GM12878 (cell line): ENCODE measurements at regions of chr10 and their contacts with region 1.

Region 1: GRCh38 chr10:50508315-50509051 is 115.3 kb downstream of the SGMS1 start:
- DNase-seq: peak; percentile 99
- ATAC-seq: peak; percentile 75
- H3K4me3 ChIP-seq: peak overlapping the region; percentile 4; the same call in 1 of the 2 replicates
- H3K27ac ChIP-seq: peak overlapping the region; percentile 80
- H3K4me1 ChIP-seq: peaks cover 68% of the 10 kb centered on the region
- H3K27me3 ChIP-seq: no peaks in the 10 kb centered on the region
- CTCF ChIP-seq: no peak
- EP300 ChIP-seq: peak; percentile 99 to 100
- POLR2A ChIP-seq: no peak
- RAD21 ChIP-seq: peak; percentile 27; the same call in 1 of the 2 replicates

Region 2: DNA sequence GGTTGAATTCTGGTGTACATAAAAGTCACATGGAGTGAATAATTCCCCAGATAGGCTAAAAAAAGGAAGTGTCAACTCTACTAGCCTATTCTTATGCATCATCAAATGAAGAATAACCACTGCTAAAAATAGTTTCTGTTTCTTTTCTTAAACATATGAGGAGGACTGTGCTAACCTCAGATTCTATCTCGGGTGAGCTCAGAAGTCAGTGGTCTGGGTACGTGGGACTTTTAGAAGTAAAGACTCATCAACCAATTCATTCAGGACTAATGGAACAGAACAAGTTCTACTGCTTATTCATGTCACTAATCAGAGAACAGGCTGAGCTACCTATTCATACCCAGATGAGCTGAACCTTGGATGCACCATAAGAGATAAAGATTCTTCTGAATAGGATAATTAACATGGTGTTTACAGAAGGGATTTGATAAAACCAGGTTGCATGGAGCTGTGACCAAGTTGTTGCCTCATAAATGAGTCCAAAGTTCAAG is 247.6 kb before region 1 on chr10:
- CTCF ChIA-PET with region 1: no interaction called
- POLR2A ChIA-PET with region 1: no interaction called
- RAD21 ChIA-PET with region 1: interaction called, 9 read pairs
- SMC1A ChIA-PET with region 1: interaction called, 10 read pairs
- in situ Hi-C with region 1: no loop called
- intact Hi-C with region 1: loop called (anchors 1 kb)
- DNase-seq: peak; percentile 71
- ATAC-seq: peak; percentile 99
- H3K4me3 ChIP-seq: no peak overlapping the region
- H3K27ac ChIP-seq: no peak overlapping the region
- H3K4me1 ChIP-seq: peaks cover 13% of the 10 kb centered on the region
- H3K27me3 ChIP-seq: no peaks in the 10 kb centered on the region; a peak in 2 of 4 replicates
- CTCF ChIP-seq: no peak
- EP300 ChIP-seq: peak; percentile 31 to 59; a peak in 2 of 4 replicates
- POLR2A ChIP-seq: no peak
- RAD21 ChIP-seq: no peak

Region 3: DNA sequence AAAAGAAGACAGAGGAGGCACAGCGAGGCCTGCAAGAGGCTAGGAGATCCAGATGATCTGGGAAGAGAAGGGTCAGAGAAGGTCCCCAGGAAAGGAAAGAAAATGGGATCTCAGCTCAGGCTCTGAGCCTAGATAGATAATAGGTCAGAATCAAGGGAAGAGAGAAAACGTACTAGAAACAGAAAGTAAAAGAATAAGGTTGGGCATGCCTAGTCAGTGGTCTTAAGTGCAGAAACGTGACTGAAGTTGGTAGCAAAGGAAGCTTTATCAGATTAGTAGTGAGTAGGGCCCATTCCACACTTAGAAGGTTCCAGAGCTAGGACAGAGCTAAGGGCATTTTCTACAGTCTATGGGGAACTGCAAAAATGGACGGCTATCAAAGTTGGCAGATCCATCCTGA is 172.3 kb before region 1 on chr10:
- CTCF ChIA-PET with region 1: no interaction called
- POLR2A ChIA-PET with region 1: no interaction called
- RAD21 ChIA-PET with region 1: no interaction called
- SMC1A ChIA-PET with region 1: no interaction called
- in situ Hi-C with region 1: no loop called
- intact Hi-C with region 1: no loop called
- DNase-seq: no peak
- ATAC-seq: peak; percentile 67
- H3K4me3 ChIP-seq: no peak overlapping the region
- H3K27ac ChIP-seq: peak overlapping the region; percentile 4; the same call in 1 of the 2 replicates
- H3K4me1 ChIP-seq: no peaks in the 10 kb centered on the region
- H3K27me3 ChIP-seq: no peaks in the 10 kb centered on the region
- CTCF ChIP-seq: no peak
- EP300 ChIP-seq: no peak
- POLR2A ChIP-seq: no peak
- RAD21 ChIP-seq: no peak

Region 4: DNA sequence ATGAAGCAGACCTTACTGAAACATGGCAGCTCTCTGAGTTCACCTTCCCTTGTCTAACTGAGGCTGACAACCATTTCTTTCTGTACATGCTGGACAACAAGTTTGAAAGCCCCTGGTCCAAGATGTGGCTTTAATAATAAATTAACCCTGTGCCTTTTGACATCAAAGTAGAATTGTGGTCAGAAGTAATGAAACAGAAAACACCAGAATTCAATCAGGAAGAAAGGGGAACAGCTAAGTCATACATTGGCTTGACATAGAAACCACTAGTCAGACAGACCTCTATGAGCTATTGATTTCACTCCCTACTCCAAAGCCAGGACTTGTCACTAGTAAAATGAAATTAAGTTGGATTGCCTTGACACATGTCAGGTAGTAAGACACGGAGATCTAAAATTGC is 82.0 kb before region 1 on chr10:
- CTCF ChIA-PET with region 1: interaction called, 8 read pairs
- POLR2A ChIA-PET with region 1: interaction called, 8 read pairs
- RAD21 ChIA-PET with region 1: interaction called, 18 read pairs
- SMC1A ChIA-PET with region 1: interaction called, 78 read pairs
- in situ Hi-C with region 1: loop called (anchors 5 kb)
- intact Hi-C with region 1: no loop called
- DNase-seq: peak; percentile 56
- ATAC-seq: peak; percentile 81
- H3K4me3 ChIP-seq: no peak overlapping the region
- H3K27ac ChIP-seq: no peak overlapping the region
- H3K4me1 ChIP-seq: peaks cover 23% of the 10 kb centered on the region
- H3K27me3 ChIP-seq: no peaks in the 10 kb centered on the region
- CTCF ChIP-seq: no peak
- EP300 ChIP-seq: no peak
- POLR2A ChIP-seq: no peak
- RAD21 ChIP-seq: no peak

Region 5: DNA sequence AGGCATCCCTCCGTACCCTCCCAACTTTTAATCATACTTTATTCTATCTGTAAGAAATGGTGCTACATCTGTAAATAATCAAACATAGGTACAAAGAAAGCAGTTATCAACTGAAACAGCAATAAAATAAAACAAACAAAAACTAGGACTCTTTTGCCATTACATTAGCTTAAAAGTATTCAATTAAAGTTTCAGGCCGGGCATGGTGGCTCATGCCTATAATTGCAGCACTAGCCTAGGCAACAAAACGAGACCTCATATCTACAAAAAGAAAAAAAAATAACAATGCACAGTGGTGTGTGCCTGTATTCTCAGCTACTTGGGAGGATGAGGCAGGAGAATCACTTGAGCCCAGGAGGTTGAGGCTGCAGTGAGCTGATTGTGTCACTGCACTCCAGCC is 46.6 kb before region 1 on chr10:
- CTCF ChIA-PET with region 1: interaction called, 8 read pairs
- POLR2A ChIA-PET with region 1: interaction called, 4 read pairs
- RAD21 ChIA-PET with region 1: interaction called, 28 read pairs
- SMC1A ChIA-PET with region 1: interaction called, 38 read pairs
- in situ Hi-C with region 1: no loop called
- intact Hi-C with region 1: no loop called
- DNase-seq: no peak
- ATAC-seq: no peak
- H3K4me3 ChIP-seq: no peak overlapping the region
- H3K27ac ChIP-seq: no peak overlapping the region
- H3K4me1 ChIP-seq: peaks cover 3% of the 10 kb centered on the region; the same call in 1 of the 2 replicates
- H3K27me3 ChIP-seq: no peaks in the 10 kb centered on the region; a peak in 1 of 4 replicates
- CTCF ChIP-seq: no peak
- EP300 ChIP-seq: no peak
- POLR2A ChIP-seq: no peak
- RAD21 ChIP-seq: no peak

Region 6: DNA sequence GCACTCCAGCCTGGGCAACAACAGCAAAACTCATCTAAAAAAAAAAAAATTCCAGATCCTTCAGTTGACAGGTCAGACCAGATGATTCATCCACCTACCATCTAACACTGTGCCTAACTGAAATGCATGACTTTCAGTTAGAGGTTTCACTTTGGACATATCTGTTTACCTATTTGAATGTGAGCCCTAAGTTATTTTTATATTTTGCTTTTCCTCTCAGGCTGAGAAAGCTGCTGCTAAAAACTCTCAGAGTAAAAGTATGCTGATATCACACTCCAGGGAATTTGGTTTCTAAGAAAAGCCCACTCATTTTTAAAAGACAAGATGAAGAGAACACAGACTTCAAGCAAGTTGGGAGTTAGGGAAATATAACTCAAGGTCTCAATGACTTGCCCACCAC is 10.7 kb before region 1 on chr10:
- CTCF ChIA-PET with region 1: interaction called, 15 read pairs
- POLR2A ChIA-PET with region 1: interaction called, 24 read pairs
- RAD21 ChIA-PET with region 1: interaction called, 38 read pairs
- SMC1A ChIA-PET with region 1: interaction called, 51 read pairs
- in situ Hi-C with region 1: no loop called
- intact Hi-C with region 1: no loop called
- DNase-seq: peak; percentile 83
- ATAC-seq: peak; percentile 90
- H3K4me3 ChIP-seq: no peak overlapping the region
- H3K27ac ChIP-seq: peak overlapping the region; percentile 93
- H3K4me1 ChIP-seq: peaks cover 32% of the 10 kb centered on the region
- H3K27me3 ChIP-seq: no peaks in the 10 kb centered on the region
- CTCF ChIP-seq: no peak
- EP300 ChIP-seq: peak; percentile 36 to 76
- POLR2A ChIP-seq: no peak
- RAD21 ChIP-seq: no peak

Region 7: DNA sequence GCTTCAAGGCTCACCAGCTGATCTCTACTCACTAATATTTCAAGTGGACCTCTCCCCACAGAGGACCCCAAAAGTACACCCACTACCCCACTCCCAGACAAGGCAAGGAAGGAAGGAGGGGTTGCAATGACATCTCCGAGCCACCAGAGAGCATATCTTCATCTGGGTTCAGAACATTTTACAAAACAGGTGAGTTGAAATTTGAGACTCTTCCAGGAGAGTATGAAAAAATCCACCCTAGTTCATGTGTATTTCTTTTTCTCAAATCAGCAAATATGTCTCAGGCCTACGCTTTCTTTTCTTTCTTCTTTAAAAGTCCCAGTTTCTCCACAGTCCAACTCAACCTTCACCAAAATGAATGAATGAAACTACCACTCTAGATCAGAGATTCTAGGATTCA is 53.3 kb after region 1 on chr10:
- CTCF ChIA-PET with region 1: no interaction called
- POLR2A ChIA-PET with region 1: no interaction called
- RAD21 ChIA-PET with region 1: no interaction called
- SMC1A ChIA-PET with region 1: interaction called, 11 read pairs
- in situ Hi-C with region 1: no loop called
- intact Hi-C with region 1: no loop called
- DNase-seq: no peak
- ATAC-seq: peak; percentile 66
- H3K4me3 ChIP-seq: no peak overlapping the region
- H3K27ac ChIP-seq: no peak overlapping the region
- H3K4me1 ChIP-seq: no peaks in the 10 kb centered on the region
- H3K27me3 ChIP-seq: no peaks in the 10 kb centered on the region
- CTCF ChIP-seq: peak; percentile 53 to 69 (median 58)
- EP300 ChIP-seq: no peak
- POLR2A ChIP-seq: no peak
- RAD21 ChIP-seq: peak; percentile 64